IMR-90 (cell line): ENCODE measurements at regions of chr2 and their contacts with region 1.

Region 1: DNA sequence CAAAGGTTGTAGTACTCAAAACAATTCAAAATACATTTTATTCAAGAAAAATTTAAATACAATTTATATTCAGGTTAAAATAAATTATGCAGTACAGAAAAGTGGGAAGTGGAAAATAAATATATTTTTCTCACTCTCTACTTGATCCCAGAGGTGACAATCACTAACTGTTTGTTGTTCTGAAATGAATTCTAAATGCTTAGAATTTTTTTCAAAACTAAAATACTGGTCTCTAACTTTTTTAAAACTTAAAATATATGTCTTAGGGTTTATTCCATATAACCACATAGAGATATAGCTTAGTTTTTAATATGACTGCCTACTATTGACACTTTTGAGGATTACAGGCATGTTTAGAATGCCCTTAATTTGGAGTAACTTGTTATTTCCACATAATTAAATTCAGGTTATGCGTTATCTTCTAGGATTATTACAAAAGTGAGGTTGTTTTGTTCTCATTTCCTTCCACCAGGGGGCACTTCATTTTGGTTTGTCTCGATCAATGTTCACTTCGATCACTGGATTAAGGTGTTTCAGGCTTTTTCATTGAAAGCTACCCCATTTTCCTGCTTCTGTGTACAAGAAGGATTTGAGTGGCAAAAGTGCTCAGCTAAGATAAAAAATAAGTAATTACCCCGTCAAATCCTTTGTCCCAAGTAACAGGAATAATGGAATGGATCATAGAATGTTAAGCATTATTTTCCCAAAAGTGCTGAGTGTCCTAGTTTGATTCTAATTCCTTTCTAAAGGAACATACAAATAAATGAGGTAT is 27.1 kb upstream of the TFPI start:
- DNase-seq: peak; percentile 52
- ATAC-seq: peak; percentile 31; the same call in 1 of the 2 replicates
- H3K4me3 ChIP-seq: peak overlapping the region; percentile 39
- H3K27ac ChIP-seq: no peak overlapping the region
- H3K4me1 ChIP-seq: peaks cover 5% of the 10 kb centered on the region
- H3K27me3 ChIP-seq: no peaks in the 10 kb centered on the region
- CTCF ChIP-seq: peak; percentile 67
- POLR2A ChIP-seq: no peak
- RAD21 ChIP-seq: peak; percentile 52

Region 2: DNA sequence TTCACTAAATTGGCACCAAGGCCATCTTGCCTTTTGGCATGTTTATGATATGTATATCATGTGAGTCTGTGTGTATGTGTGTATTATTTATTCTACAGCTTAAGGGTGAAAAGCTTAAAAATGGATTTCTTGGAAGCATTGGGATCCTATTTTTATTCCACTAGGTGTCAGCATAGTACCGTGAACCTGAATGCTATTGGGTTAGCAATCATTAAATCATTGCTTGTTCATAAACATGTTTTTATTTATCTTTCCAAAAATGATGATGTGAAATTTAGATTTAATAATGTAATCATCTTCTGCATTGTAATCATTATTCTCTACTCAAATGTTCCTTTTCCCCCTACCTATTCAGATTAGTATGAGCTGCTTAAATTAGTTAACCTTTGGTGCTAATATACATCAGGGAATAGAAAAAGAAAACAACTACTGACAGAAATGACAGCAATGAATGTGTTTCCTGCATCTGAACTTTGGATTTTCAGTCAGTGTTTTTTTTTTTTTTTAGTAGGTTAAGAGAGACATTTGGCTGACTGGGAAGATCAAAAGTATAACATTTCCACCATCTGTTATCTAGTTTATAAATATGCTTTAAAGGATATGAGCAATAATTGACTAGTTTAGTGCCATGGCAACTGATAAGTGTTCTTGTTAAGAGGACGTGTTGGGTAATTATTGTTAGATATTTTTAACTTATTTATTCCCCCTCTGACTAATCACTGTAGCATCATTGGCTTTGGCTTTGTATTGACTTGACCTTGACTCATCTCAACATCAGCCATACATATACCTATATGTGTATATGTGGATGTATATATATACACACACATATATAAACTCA is 718.2 kb before region 1 on chr2:
- CTCF ChIA-PET with region 1: no interaction called
- POLR2A ChIA-PET with region 1: no interaction called
- dilution Hi-C with region 1: no loop called
- in situ Hi-C with region 1: no loop called
- intact Hi-C with region 1: loop called (anchors 2 kb)
- DNase-seq: peak; percentile 35
- ATAC-seq: peak; percentile 79
- H3K4me3 ChIP-seq: no peak overlapping the region
- H3K27ac ChIP-seq: no peak overlapping the region
- H3K4me1 ChIP-seq: no peaks in the 10 kb centered on the region
- H3K27me3 ChIP-seq: peaks cover 2% of the 10 kb centered on the region
- CTCF ChIP-seq: peak; percentile 83
- POLR2A ChIP-seq: no peak
- RAD21 ChIP-seq: peak; percentile 85

Region 3: DNA sequence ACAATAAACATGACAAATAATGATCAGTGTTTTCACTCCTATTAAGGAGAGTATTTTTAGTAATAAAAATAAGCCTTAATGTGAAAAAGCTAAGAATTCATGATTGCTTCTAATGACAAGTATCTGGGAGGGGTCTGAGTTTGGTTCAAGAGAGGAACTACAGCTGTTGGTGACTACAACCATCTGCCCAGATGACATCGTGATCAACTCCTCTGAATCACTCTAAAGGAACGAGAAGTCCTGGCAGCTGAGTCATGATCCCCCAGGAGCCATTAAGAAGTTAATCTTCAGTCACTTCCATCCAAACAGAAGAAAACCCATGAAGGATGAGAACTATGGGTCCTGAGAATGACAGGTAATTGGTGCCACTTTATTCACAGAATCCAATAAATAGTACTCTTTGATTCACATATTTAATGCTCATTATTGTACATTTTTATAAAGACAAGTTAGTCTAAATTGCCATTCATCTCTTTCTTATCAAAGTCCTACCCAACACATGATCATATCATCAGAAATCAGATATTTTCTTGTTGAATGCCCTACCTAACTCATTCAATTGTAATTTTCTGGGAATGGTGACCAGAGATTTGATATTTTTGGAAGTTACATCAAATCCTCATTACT is 33.8 kb before region 1 on chr2:
- CTCF ChIA-PET with region 1: interaction called, 20 read pairs
- POLR2A ChIA-PET with region 1: no interaction called
- dilution Hi-C with region 1: no loop called
- in situ Hi-C with region 1: no loop called
- intact Hi-C with region 1: no loop called
- DNase-seq: peak; percentile 97
- ATAC-seq: peak; percentile 81
- H3K4me3 ChIP-seq: no peak overlapping the region
- H3K27ac ChIP-seq: peak overlapping the region; percentile 8; the same call in 1 of the 2 replicates
- H3K4me1 ChIP-seq: peaks cover 14% of the 10 kb centered on the region
- H3K27me3 ChIP-seq: no peaks in the 10 kb centered on the region
- CTCF ChIP-seq: no peak
- POLR2A ChIP-seq: no peak
- RAD21 ChIP-seq: no peak